Activated naive CD4-positive, alpha-beta T cell treated with anti-CD3 and anti-CD28 coated beads for 36 hours (primary cell): ENCODE measurements at regions of chr9 and their contacts with region 1.

Region 1: GRCh38 chr9:110152704-110153374 is 55.1 kb downstream of the C9orf152 start:
- DNase-seq: no peak
- H3K4me3 Mint-ChIP-seq: no peak overlapping the region
- H3K27ac Mint-ChIP-seq: no peak overlapping the region
- H3K4me1 Mint-ChIP-seq: peaks cover 57% of the 10 kb centered on the region
- H3K27me3 Mint-ChIP-seq: no peaks in the 10 kb centered on the region

Region 2: DNA sequence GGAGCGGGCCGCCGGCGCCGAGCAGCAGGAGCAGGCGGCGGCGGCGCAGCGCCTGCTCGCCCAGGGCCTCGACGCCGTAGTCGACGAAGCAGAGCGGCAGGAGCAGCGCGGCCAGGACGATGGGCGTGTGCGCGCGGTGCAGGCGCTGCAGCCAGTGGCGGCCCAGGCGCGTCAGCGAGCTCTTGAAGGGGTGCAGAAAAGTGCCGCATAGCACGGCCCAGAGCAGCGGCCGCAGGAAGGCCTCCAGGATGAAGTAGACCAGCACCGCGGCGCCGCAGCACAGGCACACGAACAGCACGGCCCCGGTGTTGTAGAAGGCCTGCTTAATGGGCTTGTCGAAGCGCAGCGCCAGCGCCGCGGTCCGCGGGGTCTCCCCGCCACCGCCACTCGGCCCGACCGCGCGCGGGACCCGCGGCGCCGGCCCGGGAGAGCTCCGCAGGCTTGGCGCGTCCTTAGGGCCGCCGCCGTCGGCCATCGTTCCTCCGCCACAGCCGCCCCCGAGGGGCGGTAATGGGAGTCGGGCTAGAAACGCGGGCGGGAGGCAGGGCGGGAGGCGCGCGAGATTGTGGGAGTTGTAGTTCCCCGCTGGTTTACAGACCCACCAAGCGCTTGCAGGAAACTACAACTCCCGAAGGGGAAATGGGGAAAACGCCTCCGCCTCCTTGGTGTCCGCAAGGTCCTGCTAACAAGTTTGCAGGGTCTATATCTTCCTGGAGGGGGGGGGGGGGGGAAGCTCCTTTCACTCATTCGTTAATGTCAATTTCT is 1033.2 kb before region 1 on chr9 and contains the start of gene TMEM245:
- CTCF ChIA-PET with region 1: no interaction called
- intact Hi-C with region 1: loop called (anchors 10 kb)
- DNase-seq: peak; percentile 97
- H3K4me3 Mint-ChIP-seq: peak within 1 kb of the TSS; percentile 90
- H3K27ac Mint-ChIP-seq: peak within 1 kb of the TSS; percentile 78
- H3K4me1 Mint-ChIP-seq: peaks cover 40% of the 10 kb centered on the region
- H3K27me3 Mint-ChIP-seq: no peaks in the 10 kb centered on the region
- total RNA-seq, gene TMEM245: 19.9 TPM

Region 3: GRCh38 chr9:109574068-109574882 is 578.6 kb before region 1 on chr9:
- CTCF ChIA-PET with region 1: interaction called, 3 read pairs
- intact Hi-C with region 1: loop called (anchors 1 kb)
- DNase-seq: peak; percentile 50
- H3K4me3 Mint-ChIP-seq: no peak overlapping the region
- H3K27ac Mint-ChIP-seq: no peak overlapping the region
- H3K4me1 Mint-ChIP-seq: no peaks in the 10 kb centered on the region
- H3K27me3 Mint-ChIP-seq: peaks cover 7% of the 10 kb centered on the region

Region 4: DNA sequence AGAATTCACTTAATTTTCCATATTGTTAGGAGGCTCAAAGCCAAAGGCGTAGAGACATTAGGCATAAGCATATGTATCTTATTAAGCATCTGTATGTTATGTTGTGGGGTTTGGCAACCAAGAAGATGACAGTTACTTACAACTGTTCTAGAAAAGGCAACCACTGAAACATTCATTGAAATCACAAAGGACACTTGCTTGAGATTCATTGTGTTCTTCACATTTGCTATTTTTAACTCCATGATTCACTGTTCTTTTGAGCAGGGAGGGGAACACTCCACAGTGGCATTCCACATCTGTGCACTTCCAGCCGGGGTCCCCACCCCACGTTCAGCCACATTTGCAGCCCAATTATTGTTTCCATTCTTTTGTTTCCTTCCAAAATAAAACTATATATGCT is 265.8 kb before region 1 on chr9:
- CTCF ChIA-PET with region 1: interaction called, 21 read pairs
- intact Hi-C with region 1: loop called (anchors 1 kb)
- DNase-seq: no peak
- H3K4me3 Mint-ChIP-seq: no peak overlapping the region
- H3K27ac Mint-ChIP-seq: peak overlapping the region; percentile 96
- H3K4me1 Mint-ChIP-seq: peaks cover 61% of the 10 kb centered on the region
- H3K27me3 Mint-ChIP-seq: no peaks in the 10 kb centered on the region

Region 5: DNA sequence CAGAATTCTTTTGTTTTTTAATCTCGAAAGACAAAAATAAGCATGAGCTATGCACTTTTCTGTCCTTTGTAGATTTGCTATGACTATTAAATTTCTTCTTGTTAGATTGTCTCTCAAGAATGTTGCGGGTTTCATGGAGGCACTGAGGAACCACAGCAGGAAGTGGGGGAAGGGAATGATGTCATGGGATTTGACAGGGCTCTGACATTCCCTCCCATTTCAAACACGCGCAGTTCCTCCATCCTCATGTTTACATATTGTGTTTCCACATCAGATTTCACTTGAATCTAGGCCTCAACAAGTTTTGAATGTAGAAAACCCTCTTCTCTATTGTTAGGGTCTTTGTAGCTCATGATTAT is 218.0 kb before region 1 on chr9:
- CTCF ChIA-PET with region 1: interaction called, 5 read pairs
- intact Hi-C with region 1: loop called (anchors 1 kb)
- DNase-seq: peak; percentile 41
- H3K4me3 Mint-ChIP-seq: no peak overlapping the region
- H3K27ac Mint-ChIP-seq: peak overlapping the region; percentile 73
- H3K4me1 Mint-ChIP-seq: peaks cover 42% of the 10 kb centered on the region
- H3K27me3 Mint-ChIP-seq: no peaks in the 10 kb centered on the region

Region 6: DNA sequence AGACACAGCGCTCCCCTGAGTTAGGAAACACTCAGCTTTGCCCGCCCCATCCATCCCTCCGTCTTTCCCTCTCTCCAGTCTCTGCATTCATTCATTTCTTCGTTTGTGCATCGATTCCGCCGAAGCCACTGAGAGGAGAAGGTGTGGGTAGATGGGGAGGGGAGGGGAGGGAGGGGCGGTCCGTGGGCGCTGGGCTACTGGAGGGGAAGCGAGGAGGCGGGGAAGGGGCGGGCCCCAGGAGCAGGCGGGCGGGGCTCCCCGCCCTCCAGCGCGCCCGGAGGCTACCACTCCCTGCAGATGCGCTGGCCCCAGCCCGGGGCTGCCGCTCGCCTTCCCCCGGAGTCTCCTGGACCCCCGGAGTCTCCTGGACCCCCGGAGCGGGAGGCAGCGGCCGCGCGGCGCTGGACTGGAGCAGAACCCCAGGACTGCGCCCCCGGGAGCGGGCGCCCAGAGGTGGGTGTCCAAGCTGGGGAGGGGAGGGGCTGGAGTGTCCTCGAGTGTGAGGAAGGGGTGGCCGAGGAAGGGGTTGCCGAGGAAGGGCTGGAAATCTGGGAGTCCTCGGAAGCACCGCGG is 104.3 kb before region 1 on chr9:
- CTCF ChIA-PET with region 1: interaction called, 5 read pairs
- intact Hi-C with region 1: loop called (anchors 1 kb)
- DNase-seq: peak; percentile 86
- H3K4me3 Mint-ChIP-seq: peak overlapping the region; percentile 84
- H3K27ac Mint-ChIP-seq: no peak overlapping the region
- H3K4me1 Mint-ChIP-seq: peaks cover 33% of the 10 kb centered on the region
- H3K27me3 Mint-ChIP-seq: peaks cover 12% of the 10 kb centered on the region

Region 7: DNA sequence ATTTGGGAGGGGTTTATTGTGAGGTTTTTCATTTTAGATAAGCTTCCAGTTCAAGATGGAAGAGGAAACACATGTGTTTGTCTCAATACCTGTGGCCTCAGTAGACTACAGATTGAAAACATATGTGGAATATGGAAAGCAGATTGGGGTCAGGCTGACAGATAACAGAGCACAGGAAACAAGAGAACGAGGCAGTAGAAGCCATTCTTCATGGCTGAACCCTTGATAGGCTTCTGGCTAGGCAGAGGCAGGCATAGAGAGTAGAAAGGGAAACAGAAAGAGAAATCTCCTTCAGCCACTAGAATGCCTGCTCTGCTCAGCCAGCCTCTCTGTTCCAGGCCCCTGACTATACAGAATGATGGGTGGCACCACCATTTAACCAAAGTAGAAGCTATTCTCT is 668.2 kb after region 1 on chr9:
- CTCF ChIA-PET with region 1: no interaction called
- intact Hi-C with region 1: no loop called
- DNase-seq: no peak
- H3K4me3 Mint-ChIP-seq: no peak overlapping the region
- H3K27ac Mint-ChIP-seq: no peak overlapping the region
- H3K4me1 Mint-ChIP-seq: no peaks in the 10 kb centered on the region
- H3K27me3 Mint-ChIP-seq: no peaks in the 10 kb centered on the region